ENCODE measurements at regions of chr1 and their contacts with region 1.

Region 1: GRCh38 chr1:37434292-37434907 is 40.0 kb upstream of the ZC3H12A start:
- DNase-seq: peak; percentile 87
- ATAC-seq: peak; percentile 86

Region 2: DNA sequence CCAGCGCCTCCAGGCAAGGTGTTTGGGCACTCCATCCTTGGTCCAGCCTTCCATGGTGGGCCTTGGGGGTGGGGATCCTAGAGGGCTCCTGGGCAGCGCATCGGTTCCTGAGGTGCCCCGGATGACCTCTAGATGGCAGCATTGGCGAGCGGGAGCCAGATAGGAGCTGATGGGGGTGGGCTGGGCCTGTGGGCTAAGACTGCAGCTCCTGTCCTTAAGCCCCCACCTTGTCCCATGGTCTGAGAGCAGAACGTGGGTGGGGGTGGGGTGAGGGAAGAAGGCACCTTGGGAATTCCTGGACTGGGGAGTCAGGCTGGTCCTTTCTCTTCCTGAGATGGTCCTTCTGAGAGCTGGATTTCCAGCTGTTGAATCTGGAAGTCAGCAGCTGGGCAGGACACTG is 858.3 kb before region 1 on chr1:
- intact Hi-C with region 1: loop called (anchors 10 kb)
- DNase-seq: peak; percentile 77
- ATAC-seq: peak; percentile 74

Region 3: GRCh38 chr1:36703526-36704208 is 730.7 kb before region 1 on chr1:
- intact Hi-C with region 1: loop called (anchors 5 kb)
- DNase-seq: peak; percentile 86
- ATAC-seq: peak; percentile 90